ENCODE measurements at regions of chr7 and their contacts with region 1.

Region 1: GRCh38 chr7:17940302-17940883 is at the start of gene SNX13:
- DNase-seq: peak; percentile 91
- H3K4me3 Mint-ChIP-seq: peak within 1 kb of the TSS; percentile 99
- H3K27ac Mint-ChIP-seq: peak within 1 kb of the TSS; percentile 92
- H3K4me1 Mint-ChIP-seq: peaks cover 41% of the 10 kb centered on the region
- H3K27me3 Mint-ChIP-seq: no peaks in the 10 kb centered on the region
- total RNA-seq, gene SNX13: 19.5 to 20.3 TPM

Region 2: GRCh38 chr7:17929647-17930395 is 10.6 kb before region 1 on chr7:
- CTCF ChIA-PET with region 1: no interaction called
- intact Hi-C with region 1: loop called (anchors 1 kb)
- DNase-seq: no peak
- H3K4me3 Mint-ChIP-seq: no peak overlapping the region
- H3K27ac Mint-ChIP-seq: no peak overlapping the region
- H3K4me1 Mint-ChIP-seq: peaks cover 66% of the 10 kb centered on the region
- H3K27me3 Mint-ChIP-seq: no peaks in the 10 kb centered on the region

Region 3: DNA sequence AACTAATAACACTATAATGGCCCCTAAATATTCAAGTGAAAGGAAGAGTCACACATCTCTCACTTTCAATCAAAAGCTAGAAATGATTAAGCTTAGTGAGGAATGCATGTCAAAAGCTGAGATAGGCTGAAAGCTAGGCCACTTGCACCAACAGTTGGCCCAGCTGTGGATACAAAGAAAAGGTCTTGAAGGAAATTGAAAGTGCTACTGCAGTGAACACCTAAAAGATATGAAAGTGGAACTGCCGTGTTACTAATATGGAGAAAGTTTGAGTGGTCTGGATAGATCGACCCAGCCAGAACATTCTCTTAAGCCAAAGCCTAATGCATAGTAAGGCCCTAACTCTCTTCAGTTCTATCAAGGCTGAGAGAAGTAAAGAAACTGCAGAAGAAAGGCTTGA is 12.0 kb after region 1 on chr7:
- CTCF ChIA-PET with region 1: no interaction called
- intact Hi-C with region 1: loop called (anchors 1 kb)
- DNase-seq: peak; percentile 49
- H3K4me3 Mint-ChIP-seq: no peak overlapping the region
- H3K27ac Mint-ChIP-seq: no peak overlapping the region
- H3K4me1 Mint-ChIP-seq: peaks cover 19% of the 10 kb centered on the region
- H3K27me3 Mint-ChIP-seq: peaks cover 9% of the 10 kb centered on the region

Region 4: DNA sequence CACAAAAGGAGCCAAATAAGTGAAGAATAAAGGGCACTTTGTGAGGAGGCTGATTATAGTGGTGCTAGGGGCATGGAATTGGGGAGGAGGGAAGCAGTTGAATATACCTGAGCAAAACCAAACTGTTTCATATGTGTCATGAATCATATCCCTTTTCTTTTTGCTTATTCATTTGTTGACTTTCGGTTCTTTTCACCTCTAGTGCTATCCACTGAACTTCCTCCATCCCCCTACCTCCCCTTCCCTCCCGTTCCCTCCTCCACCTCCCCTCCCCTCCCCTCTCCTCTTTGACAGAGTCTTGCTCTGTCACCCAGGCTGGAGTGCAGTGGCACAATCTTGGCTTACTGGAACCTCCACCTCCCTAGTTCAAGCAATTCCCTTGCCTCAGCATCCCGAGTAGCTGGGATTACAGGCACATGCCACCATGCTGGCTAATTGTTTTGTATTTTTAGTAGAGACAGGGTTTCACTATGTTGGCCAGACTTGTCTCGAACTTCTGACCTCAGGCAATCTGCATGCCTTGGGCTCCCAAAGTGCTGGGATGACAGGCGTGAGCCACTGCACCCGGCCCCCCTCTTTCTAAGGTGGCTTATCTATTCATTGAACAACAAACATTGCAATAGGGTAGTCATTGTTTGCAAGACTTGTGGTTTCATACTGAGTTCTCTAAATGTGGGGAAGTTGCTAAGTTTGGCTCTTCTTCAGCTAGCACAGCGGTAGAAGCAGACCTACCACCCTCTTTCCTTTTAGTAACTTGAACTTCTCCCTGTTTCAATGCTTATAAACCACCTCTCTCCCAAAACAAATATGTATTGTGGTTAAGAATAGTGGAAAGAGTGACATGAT is 237.6 kb after region 1 on chr7:
- CTCF ChIA-PET with region 1: no interaction called
- intact Hi-C with region 1: loop called (anchors 2 kb)
- DNase-seq: peak; percentile 22
- H3K4me3 Mint-ChIP-seq: no peak overlapping the region
- H3K27ac Mint-ChIP-seq: no peak overlapping the region
- H3K4me1 Mint-ChIP-seq: peaks cover 2% of the 10 kb centered on the region
- H3K27me3 Mint-ChIP-seq: peaks cover 21% of the 10 kb centered on the region

Region 5: GRCh38 chr7:19177269-19177668 is 1236.9 kb after region 1 on chr7:
- CTCF ChIA-PET with region 1: no interaction called
- intact Hi-C with region 1: no loop called
- DNase-seq: no peak
- H3K4me3 Mint-ChIP-seq: no peak overlapping the region
- H3K27ac Mint-ChIP-seq: no peak overlapping the region
- H3K4me1 Mint-ChIP-seq: no peaks in the 10 kb centered on the region
- H3K27me3 Mint-ChIP-seq: peaks cover 1% of the 10 kb centered on the region

Measured in activated naive CD4-positive, alpha-beta T cell treated with anti-CD3 and anti-CD28 coated beads for 36 hours (primary cell).